Right ventricle myocardium inferior (tissue), 1 donor: ENCODE measurements at regions of chrX and their contacts with region 1.

Region 1: GRCh38 chrX:55135171-55135570 is 46.4 kb downstream of the PAGE2 start:
- DNase-seq: no peak
- ATAC-seq: no peak

Region 2: DNA sequence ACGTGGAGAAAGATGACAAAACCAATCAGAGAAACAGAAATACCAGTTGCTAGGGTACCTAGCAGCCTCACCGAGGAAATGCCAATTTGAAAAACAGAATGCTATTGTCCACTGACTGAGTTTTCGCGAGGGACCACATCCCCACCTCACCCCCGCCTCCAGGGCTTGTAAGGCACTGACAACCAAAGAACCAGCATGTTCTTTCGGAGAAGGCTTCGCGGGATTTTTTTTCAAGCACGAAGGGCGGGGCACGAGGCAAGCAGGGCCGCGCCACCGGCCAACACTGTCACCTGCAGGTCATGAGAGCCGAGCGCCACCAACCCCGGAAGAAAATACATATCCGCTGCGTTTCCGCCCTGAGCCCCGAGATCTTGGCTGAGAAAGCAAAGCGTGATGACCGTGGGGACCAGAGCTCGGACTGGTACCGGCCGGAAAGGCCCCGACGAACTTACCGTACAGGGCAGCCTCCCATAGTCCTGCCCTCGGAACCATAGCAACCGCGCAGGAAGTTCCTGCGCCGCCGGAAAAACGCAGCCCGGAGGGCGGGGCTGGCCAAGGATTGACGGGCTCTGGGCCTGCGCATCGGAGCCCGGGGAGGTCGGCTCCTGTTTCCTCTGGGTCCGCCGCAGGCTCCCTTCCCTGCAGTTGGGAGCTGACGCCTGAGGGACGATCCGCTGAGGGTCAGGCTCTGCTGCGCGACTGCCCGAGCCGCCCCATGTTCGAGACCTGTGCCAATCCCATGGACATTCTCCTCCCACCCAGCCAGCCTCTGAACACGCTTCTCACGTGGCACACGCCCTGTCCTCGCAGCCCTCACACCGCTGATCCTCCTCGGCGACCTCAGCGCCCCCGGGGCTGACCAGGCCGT is 25.7 kb after region 1 on chrX:
- intact Hi-C with region 1: loop called (anchors 1 kb)
- DNase-seq: peak; percentile 92
- ATAC-seq: peak; percentile 100

Region 3: GRCh38 chrX:55326985-55327384 is 191.8 kb after region 1 on chrX:
- intact Hi-C with region 1: loop called (anchors 5 kb)
- DNase-seq: no peak
- ATAC-seq: no peak

Region 4: GRCh38 chrX:55342533-55343501 is 207.6 kb after region 1 on chrX:
- intact Hi-C with region 1: loop called (anchors 2 kb)
- DNase-seq: no peak
- ATAC-seq: no peak

Region 5: DNA sequence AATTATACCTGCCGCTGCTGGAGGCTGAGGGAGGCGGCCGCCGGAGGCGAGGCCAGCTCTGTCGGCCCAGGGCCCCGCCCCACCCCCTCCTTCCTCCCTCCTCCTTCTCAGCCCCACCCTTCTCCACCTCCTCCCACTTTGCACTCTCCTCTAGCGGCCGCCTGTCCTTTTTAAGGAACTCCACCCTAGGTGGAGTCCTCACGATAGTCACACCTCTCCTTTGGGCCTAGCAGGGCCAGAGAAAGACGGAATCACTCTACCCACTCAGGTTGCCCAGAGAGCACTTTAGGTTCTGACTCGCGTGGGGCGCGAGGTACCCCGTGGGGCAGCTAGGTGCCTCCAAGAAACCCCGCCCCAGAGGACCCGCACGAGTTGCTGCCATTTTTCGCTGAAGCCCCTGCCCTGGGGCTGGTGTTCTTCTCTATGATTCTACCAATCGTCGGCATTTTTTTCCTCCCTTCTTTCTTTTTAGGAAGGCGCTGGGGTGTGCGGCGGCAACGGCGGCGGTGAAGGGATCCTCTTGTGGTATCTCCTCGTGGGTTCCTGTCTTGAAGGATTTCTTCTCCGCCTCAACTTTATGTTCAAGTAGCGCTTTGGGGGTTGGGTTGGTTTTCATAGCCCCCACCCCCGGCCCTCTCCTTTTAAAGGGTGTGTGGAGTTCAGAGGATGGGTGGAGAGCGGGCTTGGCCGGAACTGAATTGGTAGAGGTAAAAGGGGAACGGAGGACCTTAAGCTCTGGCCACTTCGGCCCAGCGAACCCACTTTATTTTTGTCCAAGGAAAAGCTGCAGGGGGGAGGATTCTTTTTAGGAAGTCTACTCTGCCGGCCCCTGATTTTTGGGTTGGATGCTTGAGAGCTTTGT is 1097.3 kb after region 1 on chrX and contains the start of gene KLF8:
- intact Hi-C with region 1: loop called (anchors 10 kb)
- DNase-seq: peak; percentile 64
- ATAC-seq: peak; percentile 79
- total RNA-seq, gene KLF8: 3.1 TPM